Activated naive CD4-positive, alpha-beta T cell treated with anti-CD3 and anti-CD28 coated beads for 36 hours (primary cell): ENCODE measurements at regions of chr1 and their contacts with region 1.

Region 1: GRCh38 chr1:67853704-67854103 is 20.4 kb upstream of the GNG12 start:
- DNase-seq: peak; percentile 33
- H3K4me3 Mint-ChIP-seq: no peak overlapping the region
- H3K27ac Mint-ChIP-seq: no peak overlapping the region
- H3K4me1 Mint-ChIP-seq: no peaks in the 10 kb centered on the region
- H3K27me3 Mint-ChIP-seq: peaks cover 23% of the 10 kb centered on the region

Region 2: GRCh38 chr1:67748630-67749029 is 105.1 kb before region 1 on chr1:
- CTCF ChIA-PET with region 1: no interaction called
- intact Hi-C with region 1: no loop called
- DNase-seq: no peak
- H3K4me3 Mint-ChIP-seq: no peak overlapping the region
- H3K27ac Mint-ChIP-seq: no peak overlapping the region
- H3K4me1 Mint-ChIP-seq: peaks cover 21% of the 10 kb centered on the region
- H3K27me3 Mint-ChIP-seq: no peaks in the 10 kb centered on the region

Region 3: DNA sequence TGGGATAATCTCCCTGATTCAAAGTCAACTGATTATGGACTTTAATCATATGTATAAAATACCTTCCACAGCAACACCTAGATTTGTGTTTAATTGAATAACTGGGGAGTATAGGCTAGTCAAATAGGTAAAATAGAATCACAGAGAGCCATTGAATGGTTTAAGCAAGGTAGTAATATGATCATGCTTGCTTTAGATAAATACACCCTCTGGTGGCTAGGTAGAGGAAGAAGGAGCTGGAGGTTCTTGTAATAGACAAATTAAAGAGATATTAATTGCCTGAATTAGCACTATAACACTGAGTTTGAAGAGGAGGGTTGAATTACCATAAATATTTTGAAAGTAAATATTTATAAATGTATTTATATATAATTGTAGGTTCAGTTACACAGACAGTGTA is 156.4 kb after region 1 on chr1:
- CTCF ChIA-PET with region 1: interaction called, 4 read pairs
- intact Hi-C with region 1: loop called (anchors 5 kb)
- DNase-seq: no peak
- H3K4me3 Mint-ChIP-seq: no peak overlapping the region
- H3K27ac Mint-ChIP-seq: no peak overlapping the region
- H3K4me1 Mint-ChIP-seq: no peaks in the 10 kb centered on the region
- H3K27me3 Mint-ChIP-seq: no peaks in the 10 kb centered on the region

Region 4: GRCh38 chr1:68111519-68112436 is 258.1 kb after region 1 on chr1:
- CTCF ChIA-PET with region 1: interaction called, 11 read pairs
- intact Hi-C with region 1: loop called (anchors 1 kb)
- DNase-seq: peak; percentile 11
- H3K4me3 Mint-ChIP-seq: no peak overlapping the region
- H3K27ac Mint-ChIP-seq: no peak overlapping the region
- H3K4me1 Mint-ChIP-seq: peaks cover 1% of the 10 kb centered on the region
- H3K27me3 Mint-ChIP-seq: peaks cover 2% of the 10 kb centered on the region

Region 5: GRCh38 chr1:68120136-68120791 is 266.6 kb after region 1 on chr1:
- CTCF ChIA-PET with region 1: no interaction called
- intact Hi-C with region 1: loop called (anchors 1 kb)
- DNase-seq: peak; percentile 51
- H3K4me3 Mint-ChIP-seq: no peak overlapping the region
- H3K27ac Mint-ChIP-seq: no peak overlapping the region
- H3K4me1 Mint-ChIP-seq: peaks cover 4% of the 10 kb centered on the region
- H3K27me3 Mint-ChIP-seq: peaks cover 6% of the 10 kb centered on the region

Region 6: DNA sequence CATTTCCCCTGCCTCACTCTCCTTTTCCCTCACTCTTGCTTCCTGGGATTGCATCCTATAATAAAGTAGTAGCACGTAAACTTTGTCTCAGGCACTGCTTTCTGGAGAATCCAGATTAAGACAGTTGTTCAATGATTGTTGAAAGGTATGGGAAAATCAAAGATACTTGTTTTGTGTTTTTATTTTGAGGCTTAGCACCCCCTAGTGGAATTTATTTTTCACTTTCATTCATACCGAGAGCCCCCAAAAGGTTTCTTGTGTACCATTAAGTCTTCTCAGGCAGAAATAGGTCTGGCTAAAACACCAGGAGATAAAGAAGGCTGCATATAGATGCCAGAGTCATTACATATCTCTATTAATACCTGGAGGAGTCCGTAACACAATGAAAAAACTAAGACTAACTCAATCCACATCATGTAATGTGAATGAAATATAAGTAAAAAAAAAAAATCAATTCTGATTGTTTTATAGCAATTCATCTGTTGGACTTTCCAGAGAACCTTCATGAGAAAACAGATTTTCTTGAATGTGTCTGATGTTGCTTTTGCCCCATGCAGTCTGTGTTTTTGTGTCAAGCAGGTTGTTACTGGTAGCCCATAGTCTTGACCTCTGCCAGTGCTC is 492.6 kb after region 1 on chr1:
- CTCF ChIA-PET with region 1: no interaction called
- intact Hi-C with region 1: loop called (anchors 1 kb)
- DNase-seq: no peak
- H3K4me3 Mint-ChIP-seq: no peak overlapping the region
- H3K27ac Mint-ChIP-seq: no peak overlapping the region
- H3K4me1 Mint-ChIP-seq: no peaks in the 10 kb centered on the region
- H3K27me3 Mint-ChIP-seq: no peaks in the 10 kb centered on the region

Region 7: GRCh38 chr1:68442822-68443556 is 589.3 kb after region 1 on chr1:
- CTCF ChIA-PET with region 1: interaction called, 5 read pairs
- intact Hi-C with region 1: loop called (anchors 5 kb)
- DNase-seq: peak; percentile 23
- H3K4me3 Mint-ChIP-seq: no peak overlapping the region
- H3K27ac Mint-ChIP-seq: no peak overlapping the region
- H3K4me1 Mint-ChIP-seq: no peaks in the 10 kb centered on the region
- H3K27me3 Mint-ChIP-seq: peaks cover 2% of the 10 kb centered on the region